ENCODE measurements at regions of chr1 and their contacts with region 1.

Region 1: GRCh38 chr1:60765204-60765603 is 317.2 kb upstream of the NFIA start:
- DNase-seq: peak in 1 of 2 experiments; percentile 7
- H3K4me3 ChIP-seq: no peak overlapping the region
- H3K27ac ChIP-seq: no peak overlapping the region
- H3K4me1 ChIP-seq: no peaks in the 10 kb centered on the region
- H3K27me3 ChIP-seq: no peaks in the 10 kb centered on the region; a peak in 1 of 7 replicates
- CTCF ChIP-seq: peak; percentile 46 to 79 (median 67)
- EP300 ChIP-seq: no peak
- POLR2A ChIP-seq: no peak
- RAD21 ChIP-seq: peak; percentile 82 to 87

Region 2: DNA sequence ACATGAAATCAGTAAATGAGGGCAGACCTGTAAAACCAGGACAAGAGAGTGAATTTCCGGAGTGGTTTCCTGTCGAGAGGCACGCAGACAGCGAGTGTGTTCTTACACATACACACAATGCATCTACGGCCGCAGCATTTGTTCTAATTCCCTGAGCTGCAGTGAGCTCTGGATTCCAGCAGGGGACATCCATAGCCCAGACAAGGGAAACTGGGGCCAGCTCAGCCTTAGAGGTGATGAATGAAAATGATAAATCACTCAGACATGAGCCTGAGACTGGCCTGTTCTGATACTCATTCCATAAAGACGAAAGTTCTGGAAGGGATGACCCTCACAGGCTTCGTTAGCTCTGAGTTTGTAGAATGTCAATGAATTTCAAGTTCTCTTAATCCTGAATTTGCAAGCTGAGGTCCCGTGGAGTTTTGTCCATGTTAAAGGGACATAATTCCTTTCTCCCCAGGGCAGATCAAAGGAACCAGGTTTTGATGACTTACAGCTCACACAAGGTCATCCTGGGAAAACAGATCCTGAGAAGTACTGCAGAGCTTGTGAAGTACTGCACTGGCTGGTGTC is 483.8 kb before region 1 on chr1:
- CTCF ChIA-PET with region 1: interaction called, 23 read pairs
- POLR2A ChIA-PET with region 1: no interaction called
- DNase-seq: peak; percentile 59 to 61
- H3K4me3 ChIP-seq: no peak overlapping the region
- H3K27ac ChIP-seq: no peak overlapping the region
- H3K4me1 ChIP-seq: peaks cover 0 to 5% (median 0%) of the 10 kb centered on the region in 4 experiments; a peak in 2 of 7 replicates
- H3K27me3 ChIP-seq: no peaks in the 10 kb centered on the region
- CTCF ChIP-seq: peak; percentile 78 to 95 (median 82)
- EP300 ChIP-seq: no peak
- POLR2A ChIP-seq: no peak
- RAD21 ChIP-seq: peak; percentile 97 to 98

Region 3: DNA sequence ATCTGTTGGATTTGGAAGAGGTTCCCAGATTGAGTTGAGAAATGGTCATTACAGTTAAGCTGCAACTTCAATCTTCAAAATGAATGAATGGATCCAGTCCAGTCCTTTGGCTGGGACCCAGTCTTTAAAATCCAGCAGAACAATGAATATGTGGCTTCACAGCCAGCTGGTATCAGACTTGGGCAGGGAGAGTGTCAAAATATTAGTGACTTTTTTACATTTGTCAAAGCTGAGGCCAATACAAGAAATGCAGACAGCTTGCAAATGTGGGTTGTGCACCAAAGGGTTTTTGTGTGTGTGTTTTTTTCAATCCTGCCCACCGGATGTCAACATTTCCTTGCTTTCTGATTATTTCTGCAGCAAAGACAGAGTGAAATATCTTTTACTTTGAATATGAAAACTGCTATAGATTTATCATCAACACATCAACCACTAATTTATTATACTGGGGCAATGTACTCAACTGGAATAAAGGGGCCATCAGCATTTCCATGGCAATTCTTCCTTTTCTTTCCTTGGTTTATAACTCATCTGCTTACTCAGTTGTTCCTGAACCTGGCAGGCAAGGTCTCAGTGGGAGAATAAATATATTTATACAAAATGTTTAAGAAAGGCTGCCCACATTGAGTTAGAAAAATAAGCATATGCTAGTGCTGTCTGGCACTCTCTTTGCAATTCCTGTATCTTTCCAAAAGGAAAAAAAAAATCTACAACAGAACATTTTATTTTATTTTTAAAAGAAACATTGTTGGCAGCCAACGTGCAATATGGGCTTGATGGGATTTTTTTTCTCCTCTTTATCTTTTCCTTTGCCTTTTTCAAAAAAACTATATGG is 200.1 kb before region 1 on chr1:
- CTCF ChIA-PET with region 1: interaction called, 14 read pairs
- POLR2A ChIA-PET with region 1: no interaction called
- DNase-seq: no peak
- H3K4me3 ChIP-seq: no peak overlapping the region
- H3K27ac ChIP-seq: no peak overlapping the region
- H3K4me1 ChIP-seq: no peaks in the 10 kb centered on the region
- H3K27me3 ChIP-seq: no peaks in the 10 kb centered on the region
- CTCF ChIP-seq: no peak
- EP300 ChIP-seq: no peak
- POLR2A ChIP-seq: no peak
- RAD21 ChIP-seq: peak; percentile 48

Region 4: GRCh38 chr1:60637651-60638050 is 127.6 kb before region 1 on chr1:
- CTCF ChIA-PET with region 1: no interaction called
- POLR2A ChIA-PET with region 1: no interaction called
- DNase-seq: no peak
- H3K4me3 ChIP-seq: no peak overlapping the region
- H3K27ac ChIP-seq: no peak overlapping the region
- H3K4me1 ChIP-seq: 0 out of 7 replicates have a peak, but pooled peaks cover 0 to 2% (median 0%) of the 10 kb centered on the region in 4 experiments
- H3K27me3 ChIP-seq: no peaks in the 10 kb centered on the region
- CTCF ChIP-seq: no peak
- EP300 ChIP-seq: no peak
- POLR2A ChIP-seq: no peak
- RAD21 ChIP-seq: no peak

Region 5: DNA sequence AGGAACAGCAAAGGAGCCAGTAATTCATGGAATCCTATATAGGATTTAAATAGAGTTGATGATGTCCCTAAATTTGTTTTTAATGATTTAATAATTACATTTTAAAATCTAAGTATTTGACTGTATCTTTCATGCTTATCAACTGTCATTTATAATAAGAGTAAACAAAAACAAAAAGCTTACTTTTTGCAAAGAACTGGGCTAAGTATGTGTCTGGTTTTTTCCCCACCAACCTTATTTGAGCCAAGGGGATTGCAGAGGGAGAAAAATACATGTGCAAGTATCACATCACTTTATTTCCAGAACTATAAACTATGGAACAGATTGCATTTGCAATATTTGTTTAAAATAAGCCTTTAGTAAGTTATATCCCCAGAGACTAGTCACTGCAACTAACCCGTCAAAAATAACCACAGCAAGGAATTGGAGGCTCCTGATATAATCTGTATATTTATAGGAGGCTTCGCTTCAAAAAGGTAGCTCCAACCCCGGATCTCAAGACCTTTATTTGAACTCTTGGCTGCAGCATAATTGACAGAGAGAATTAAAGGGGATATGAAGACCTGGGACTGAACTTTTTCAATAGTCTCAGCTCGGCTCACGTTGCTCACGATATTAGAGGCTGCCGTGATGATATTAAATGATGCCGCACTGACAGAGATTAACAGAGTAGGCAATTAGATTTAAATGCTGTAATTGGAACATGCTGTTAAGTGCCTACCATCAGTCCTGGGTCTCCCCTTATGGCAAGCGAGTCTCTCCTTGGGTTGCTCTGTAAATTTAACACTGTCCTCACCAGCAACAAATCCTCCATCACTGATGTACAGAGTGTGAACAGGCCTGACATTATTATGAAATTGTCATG is 11.9 kb before region 1 on chr1:
- CTCF ChIA-PET with region 1: interaction called, 13 read pairs
- POLR2A ChIA-PET with region 1: no interaction called
- DNase-seq: no peak
- H3K4me3 ChIP-seq: no peak overlapping the region
- H3K27ac ChIP-seq: no peak overlapping the region
- H3K4me1 ChIP-seq: no peaks in the 10 kb centered on the region
- H3K27me3 ChIP-seq: no peaks in the 10 kb centered on the region
- CTCF ChIP-seq: no peak
- EP300 ChIP-seq: no peak
- POLR2A ChIP-seq: no peak
- RAD21 ChIP-seq: no peak

Measured in H1 (cell line).